ENCODE measurements at regions of chr10 and their contacts with region 1.

Region 1: DNA sequence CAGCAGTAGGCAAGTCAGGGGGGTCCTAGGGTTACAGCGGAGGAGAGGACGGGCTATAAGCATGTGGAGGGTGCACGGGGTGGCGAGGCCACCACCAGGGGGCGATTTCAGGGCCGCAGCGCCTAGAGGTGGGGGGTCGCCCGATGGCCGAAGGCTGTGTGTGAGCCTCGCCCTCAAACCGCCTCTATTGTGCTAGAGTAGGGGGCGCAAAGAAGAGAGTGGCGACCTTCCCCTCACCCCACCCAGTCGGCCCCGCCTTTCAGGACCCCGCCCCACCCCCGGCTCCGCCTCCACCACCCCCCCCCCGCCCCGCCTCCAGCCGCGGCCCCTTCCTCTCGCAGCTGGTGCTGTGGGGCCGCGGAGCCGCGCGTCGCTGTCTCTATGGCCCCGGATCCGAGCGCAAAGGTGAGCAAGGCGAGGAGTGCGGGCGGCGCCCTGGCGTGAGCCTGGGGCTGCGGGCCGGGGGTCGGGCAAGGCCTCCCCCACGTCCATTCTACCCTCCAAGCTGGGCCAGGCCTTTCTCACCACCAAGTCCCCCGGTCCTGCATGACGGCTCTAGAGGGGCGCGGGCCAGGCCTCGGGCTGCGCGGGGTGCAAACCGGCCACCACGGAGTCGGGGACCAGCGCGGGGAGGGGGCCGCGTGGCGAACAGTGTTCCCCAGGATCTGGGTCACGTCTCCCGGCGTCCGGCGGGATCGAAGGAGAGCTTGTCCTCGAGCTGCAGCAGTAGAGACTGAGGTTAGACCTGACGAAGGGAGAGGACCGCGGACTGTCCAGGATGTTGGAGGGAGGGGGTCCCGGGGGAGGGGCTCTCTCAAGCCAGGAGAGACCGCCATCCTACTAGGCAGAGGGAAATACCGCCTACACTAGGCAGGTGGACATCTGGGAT is at the start of gene SEMA4G:
- DNase-seq: peak; percentile 82
- H3K4me3 Mint-ChIP-seq: peak within 1 kb of the TSS; percentile 72
- H3K27ac Mint-ChIP-seq: no peak within 1 kb of the TSS
- H3K4me1 Mint-ChIP-seq: peaks cover 6% of the 10 kb centered on the region
- H3K27me3 Mint-ChIP-seq: peaks cover 6% of the 10 kb centered on the region
- total RNA-seq, gene SEMA4G: 1.4 and 1.8 TPM in 2 replicates

Region 2: GRCh38 chr10:100896876-100897461 is 72.5 kb before region 1 on chr10:
- intact Hi-C with region 1: no loop called
- DNase-seq: no peak
- H3K4me3 Mint-ChIP-seq: no peak overlapping the region
- H3K27ac Mint-ChIP-seq: no peak overlapping the region
- H3K4me1 Mint-ChIP-seq: peaks cover 1% of the 10 kb centered on the region
- H3K27me3 Mint-ChIP-seq: peaks cover 64% of the 10 kb centered on the region

Region 3: GRCh38 chr10:101012525-101013364 is 43.3 kb after region 1 on chr10:
- intact Hi-C with region 1: loop called (anchors 1 kb)
- DNase-seq: peak; percentile 92
- H3K4me3 Mint-ChIP-seq: no peak overlapping the region
- H3K27ac Mint-ChIP-seq: peak overlapping the region; percentile 81
- H3K4me1 Mint-ChIP-seq: peaks cover 26% of the 10 kb centered on the region
- H3K27me3 Mint-ChIP-seq: peaks cover 28% of the 10 kb centered on the region

Measured in activated CD4-positive, alpha-beta T cell treated with anti-CD3 and anti-CD28 coated beads, Interleukin-2, amount 10 ng/mL, durations not matched to agents 24 days and 14 days (primary cell).